PC-9 (cell line): ENCODE measurements at regions of chr2 and their contacts with region 1.

Region 1: GRCh38 chr2:71661782-71662181 is 208.4 kb downstream of the DYSF start:
- DNase-seq: no peak
- H3K4me3 ChIP-seq: no peak overlapping the region
- H3K27ac ChIP-seq: no peak overlapping the region
- H3K4me1 ChIP-seq: no peaks in the 10 kb centered on the region
- H3K27me3 ChIP-seq: no peaks in the 10 kb centered on the region
- CTCF ChIP-seq: no peak

Region 2: DNA sequence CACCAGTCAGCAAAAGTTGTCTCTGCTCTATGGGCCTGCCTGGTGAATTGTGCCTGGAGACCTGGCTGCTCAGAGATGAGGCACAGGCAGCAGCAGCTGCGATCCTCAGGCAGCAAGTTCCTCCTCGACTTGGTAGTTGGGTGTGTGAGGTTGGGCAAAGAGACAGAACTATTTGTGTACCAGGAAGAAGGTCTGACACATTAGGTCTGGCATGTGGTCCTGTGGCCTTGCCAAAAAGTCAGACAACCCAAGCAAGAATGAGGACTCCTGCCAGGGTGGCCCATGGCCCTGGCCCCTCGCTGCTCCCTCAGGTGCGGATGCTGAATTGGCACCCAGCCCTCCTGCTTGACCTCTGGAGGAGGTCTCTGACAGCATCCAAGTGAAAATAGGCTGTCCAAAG is 15.8 kb before region 1 on chr2:
- CTCF ChIA-PET with region 1: no interaction called
- POLR2A ChIA-PET with region 1: no interaction called
- intact Hi-C with region 1: no loop called
- DNase-seq: peak; percentile 75 to 94
- H3K4me3 ChIP-seq: no peak overlapping the region
- H3K27ac ChIP-seq: 0 out of 2 replicates have a peak overlapping the region, but pooled peaks have one; percentile 29
- H3K4me1 ChIP-seq: peaks cover 34% of the 10 kb centered on the region
- H3K27me3 ChIP-seq: no peaks in the 10 kb centered on the region
- CTCF ChIP-seq: no peak

Region 3: GRCh38 chr2:72051971-72052505 is 390.3 kb after region 1 on chr2:
- CTCF ChIA-PET with region 1: interaction called, 12 read pairs
- POLR2A ChIA-PET with region 1: no interaction called
- intact Hi-C with region 1: no loop called
- DNase-seq: no peak
- H3K4me3 ChIP-seq: no peak overlapping the region
- H3K27ac ChIP-seq: no peak overlapping the region
- H3K4me1 ChIP-seq: no peaks in the 10 kb centered on the region
- H3K27me3 ChIP-seq: no peaks in the 10 kb centered on the region
- CTCF ChIP-seq: no peak